ENCODE measurements at regions of chr16 and their contacts with region 1.

Region 1: DNA sequence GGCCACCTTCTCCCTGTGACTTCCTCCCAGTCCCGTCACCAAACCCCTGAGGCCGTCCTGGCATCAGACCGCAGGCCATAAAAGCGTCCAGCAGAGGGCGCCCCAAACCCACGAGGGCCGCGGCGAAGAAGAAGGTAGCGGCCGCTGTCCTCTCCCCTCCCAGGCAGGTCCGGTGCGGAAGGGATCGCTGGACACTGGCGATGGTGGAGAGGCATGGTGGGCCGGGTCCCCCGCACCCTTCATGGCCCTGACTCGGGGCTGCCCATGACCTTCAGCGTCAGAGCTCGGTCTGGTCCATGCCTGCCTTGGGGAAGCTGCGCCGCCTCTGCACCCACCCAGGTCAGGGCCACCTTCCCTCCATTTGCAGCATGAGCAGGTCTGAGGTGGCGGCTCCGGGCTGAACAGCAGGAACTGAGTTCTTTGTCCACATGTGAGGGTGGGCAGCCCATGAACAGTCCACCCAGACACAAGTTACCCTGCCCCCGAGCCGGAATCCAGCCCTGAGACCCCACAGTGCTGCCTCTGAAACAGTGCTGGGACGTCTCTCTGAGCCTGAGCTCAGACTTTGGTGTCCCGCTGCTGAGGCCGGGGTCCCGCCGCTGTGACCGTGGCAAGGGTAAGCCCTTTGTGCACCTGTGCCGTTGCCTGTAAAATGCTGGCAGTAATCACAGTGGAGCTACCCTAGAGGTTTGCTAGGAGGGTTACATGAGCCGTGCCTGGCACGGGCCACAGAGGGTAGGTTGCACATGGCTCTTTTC is 40.8 kb upstream of the CMIP start:
- DNase-seq: peak; percentile 68 to 94 (median 84)

Region 2: GRCh38 chr16:81280393-81280792 is 123.4 kb before region 1 on chr16:
- intact Hi-C with region 1: no loop called
- DNase-seq: no peak

Region 3: GRCh38 chr16:81723098-81723723 is 319.4 kb after region 1 on chr16:
- intact Hi-C with region 1: loop called (anchors 2 kb)
- DNase-seq: peak in 14 of 42 donors; percentile 39 to 85 (median 66)

Region 4: GRCh38 chr16:81737885-81738786 is 334.3 kb after region 1 on chr16:
- intact Hi-C with region 1: loop called (anchors 5 kb)
- DNase-seq: peak; percentile 67 to 93 (median 84)